Sigmoid colon (tissue), 7 donors: ENCODE measurements at regions of chr15 and their contacts with region 1.

Region 1: GRCh38 chr15:65832549-65833364 is 36.5 kb upstream of the RAB11A start:
- DNase-seq: peak; percentile 95
- H3K4me3 ChIP-seq: peak overlapping the region in 1 of 4 donors; percentile 25
- H3K27ac ChIP-seq: peak overlapping the region; percentile 73 to 85 (median 79)
- H3K4me1 ChIP-seq: peaks cover 0 to 41% (median 36%) of the 10 kb centered on the region in 4 donors
- H3K27me3 ChIP-seq: no peaks in the 10 kb centered on the region
- CTCF ChIP-seq: no peak
- EP300 ChIP-seq: peak in 1 of 4 donors; percentile 2
- POLR2A ChIP-seq: no peak

Region 2: DNA sequence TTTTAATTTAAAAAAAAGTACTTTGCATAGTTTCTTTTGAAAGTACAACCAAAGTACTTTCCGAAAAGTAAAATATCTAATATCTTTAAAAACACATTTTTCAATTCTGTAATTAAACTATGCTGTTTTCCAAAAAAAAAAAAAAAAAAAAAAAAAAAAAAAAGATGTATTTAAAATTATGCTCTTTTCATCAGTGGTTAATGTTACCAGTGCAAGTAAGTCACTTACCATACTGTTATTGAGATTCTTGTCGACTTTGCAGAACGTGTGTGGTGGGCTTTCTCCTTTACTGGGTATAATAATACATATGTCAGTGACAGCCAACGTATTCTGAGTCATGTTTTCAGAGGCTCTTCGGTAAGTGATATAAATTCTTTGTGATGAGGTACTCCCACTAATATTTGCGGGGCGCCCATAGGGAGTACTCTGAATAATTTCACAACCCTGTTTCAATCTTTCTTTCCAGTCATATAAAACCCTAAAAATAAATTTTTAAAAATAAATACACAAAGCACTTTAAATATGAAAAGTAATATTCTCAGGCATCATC is 80.5 kb before region 1 on chr15:
- intact Hi-C with region 1: loop called (anchors 5 kb)
- DNase-seq: no peak
- H3K4me3 ChIP-seq: no peak overlapping the region
- H3K27ac ChIP-seq: no peak overlapping the region
- H3K4me1 ChIP-seq: no peaks in the 10 kb centered on the region
- H3K27me3 ChIP-seq: no peaks in the 10 kb centered on the region
- CTCF ChIP-seq: no peak
- EP300 ChIP-seq: no peak
- POLR2A ChIP-seq: no peak

Region 3: GRCh38 chr15:65881766-65882434 is 49.1 kb after region 1 on chr15:
- intact Hi-C with region 1: no loop called
- DNase-seq: no peak
- H3K4me3 ChIP-seq: no peak overlapping the region
- H3K27ac ChIP-seq: no peak overlapping the region
- H3K4me1 ChIP-seq: no peaks in the 10 kb centered on the region
- H3K27me3 ChIP-seq: no peaks in the 10 kb centered on the region
- CTCF ChIP-seq: no peak
- EP300 ChIP-seq: no peak
- POLR2A ChIP-seq: no peak